Posterior vena cava (tissue), 2 donors: ENCODE measurements at regions of chr6 and their contacts with region 1.

Region 1: GRCh38 chr6:31079656-31080261 is 32.6 kb downstream of the C6orf15 start:
- DNase-seq: peak; percentile 85

Region 2: GRCh38 chr6:30828027-30828960 is 251.5 kb before region 1 on chr6:
- intact Hi-C with region 1: loop called (anchors 5 to 10 kb)
- DNase-seq: peak; percentile 96

Region 3: GRCh38 chr6:30836431-30836866 is 243.3 kb before region 1 on chr6:
- intact Hi-C with region 1: loop called in 1 of 2 experiments (anchors 10 kb)
- DNase-seq: no peak

Region 4: DNA sequence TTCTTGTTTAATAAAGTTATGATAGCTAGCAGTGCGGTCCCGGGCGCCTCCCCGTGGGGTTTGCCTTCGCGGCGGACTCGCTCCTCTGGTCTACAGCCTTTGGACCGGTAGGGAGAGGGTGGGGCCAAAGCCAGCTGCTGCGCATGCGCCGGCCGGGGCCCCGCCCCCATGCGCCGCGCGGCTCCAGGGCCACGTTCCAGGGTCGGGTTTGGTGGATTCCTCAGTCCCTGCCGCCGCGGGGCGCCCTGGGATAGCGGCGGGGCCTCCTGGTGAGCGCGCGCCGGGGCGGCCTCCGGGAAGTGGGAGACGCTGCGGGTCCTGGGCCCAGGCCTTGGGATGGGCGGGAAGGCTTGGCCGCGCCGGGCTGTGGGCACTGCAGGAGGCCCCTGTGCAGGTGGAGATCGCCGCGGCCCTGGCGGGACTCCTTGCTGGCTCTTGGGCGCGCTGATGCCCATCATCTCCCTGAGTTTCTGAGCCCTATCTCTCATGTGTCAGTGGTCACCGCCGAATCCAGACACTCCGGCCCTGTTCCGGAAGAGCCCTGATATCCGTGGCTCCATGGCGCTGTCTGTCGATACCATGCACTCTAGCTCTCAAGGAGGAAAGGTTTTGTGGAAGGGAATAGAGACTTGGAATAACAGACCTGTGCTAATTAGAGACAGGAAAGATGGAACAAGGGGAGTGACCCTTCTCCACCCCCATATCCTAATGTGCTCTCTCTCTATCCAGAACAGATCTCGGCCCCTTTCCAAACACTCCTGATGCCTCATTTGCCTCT is 165.5 kb before region 1 on chr6 and contains the start of gene VARS2:
- intact Hi-C with region 1: loop called (anchors 5 kb)
- DNase-seq: peak; percentile 96
- total RNA-seq, gene VARS2: 13.8 to 17.8 TPM